ENCODE measurements at regions of chr17 and their contacts with region 1.

Region 1: GRCh38 chr17:42937712-42938596 is 26.3 kb downstream of the AARSD1 start:
- DNase-seq: no peak
- ATAC-seq: peak; percentile 68

Region 2: GRCh38 chr17:42577532-42578281 is 360.2 kb before region 1 on chr17 and contains the start of gene PSMC3IP:
- intact Hi-C with region 1: no loop called
- DNase-seq: peak; percentile 96
- ATAC-seq: peak; percentile 95
- total RNA-seq, gene PSMC3IP: 3.1 TPM

Region 3: DNA sequence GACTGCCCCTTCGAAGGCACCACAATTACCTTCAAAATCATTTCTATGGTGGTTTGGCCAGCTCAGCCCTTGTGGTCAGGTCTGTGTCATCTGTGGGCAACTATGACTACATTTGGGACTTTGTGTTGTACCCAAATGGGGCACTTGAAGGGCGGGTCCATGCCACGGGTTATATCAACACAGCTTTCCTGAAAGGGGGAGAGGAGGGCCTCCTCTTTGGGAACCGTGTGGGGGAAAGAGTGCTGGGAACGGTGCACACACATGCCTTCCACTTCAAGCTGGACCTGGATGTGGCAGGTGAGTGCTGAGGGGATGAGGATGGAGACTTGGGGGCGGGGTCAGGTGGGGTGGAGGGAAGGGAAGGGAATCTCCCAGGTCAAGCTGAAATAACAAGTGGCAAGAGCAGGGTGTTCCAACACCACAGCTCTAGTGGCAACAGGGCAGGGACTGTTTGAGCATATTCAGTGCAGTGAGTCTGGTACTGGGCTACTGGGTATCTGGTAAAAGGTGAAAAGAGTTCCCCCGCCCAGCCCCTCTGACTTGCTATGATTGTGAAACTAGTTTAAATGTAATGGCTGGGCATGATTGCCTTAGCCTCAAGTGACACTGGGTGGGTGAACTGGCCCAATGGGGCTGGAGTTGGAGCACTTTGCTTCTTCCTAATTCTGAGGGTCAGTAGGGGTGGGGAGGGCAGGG is 91.9 kb before region 1 on chr17:
- intact Hi-C with region 1: loop called (anchors 2 kb)
- DNase-seq: no peak
- ATAC-seq: no peak

Region 4: GRCh38 chr17:43183921-43184320 is 246.0 kb after region 1 on chr17:
- intact Hi-C with region 1: no loop called
- DNase-seq: no peak
- ATAC-seq: no peak

Region 5: GRCh38 chr17:43477832-43478634 is 540.1 kb after region 1 on chr17:
- intact Hi-C with region 1: no loop called
- DNase-seq: no peak
- ATAC-seq: no peak

Region 6: GRCh38 chr17:43814072-43814471 is 876.1 kb after region 1 on chr17:
- intact Hi-C with region 1: no loop called
- DNase-seq: no peak
- ATAC-seq: no peak